ENCODE measurements at regions of chr19 and their contacts with region 1.

Region 1: GRCh38 chr19:10112895-10113591 is 1.6 kb downstream of the P2RY11 start:
- DNase-seq: peak; percentile 66
- ATAC-seq: peak; percentile 49
- H3K4me3 Mint-ChIP-seq: peak overlapping the region; percentile 76
- H3K27ac Mint-ChIP-seq: peak overlapping the region; percentile 82
- H3K4me1 Mint-ChIP-seq: peaks cover 40% of the 10 kb centered on the region
- H3K27me3 Mint-ChIP-seq: no peaks in the 10 kb centered on the region
- CTCF ChIP-seq: no peak

Region 2: GRCh38 chr19:10027158-10027693 is 85.8 kb before region 1 on chr19:
- CTCF ChIA-PET with region 1: interaction called, 4 read pairs
- POLR2A ChIA-PET with region 1: interaction called, 5 read pairs
- intact Hi-C with region 1: loop called (anchors 5 kb)
- DNase-seq: no peak
- ATAC-seq: no peak
- H3K4me3 Mint-ChIP-seq: no peak overlapping the region
- H3K27ac Mint-ChIP-seq: no peak overlapping the region
- H3K4me1 Mint-ChIP-seq: no peaks in the 10 kb centered on the region
- H3K27me3 Mint-ChIP-seq: peaks cover 23% of the 10 kb centered on the region
- CTCF ChIP-seq: no peak

Region 3: GRCh38 chr19:10074153-10074552 is 38.9 kb before region 1 on chr19:
- CTCF ChIA-PET with region 1: no interaction called
- POLR2A ChIA-PET with region 1: no interaction called
- intact Hi-C with region 1: loop called (anchors 1 kb)
- DNase-seq: no peak
- ATAC-seq: peak; percentile 52
- H3K4me3 Mint-ChIP-seq: no peak overlapping the region
- H3K27ac Mint-ChIP-seq: no peak overlapping the region
- H3K4me1 Mint-ChIP-seq: no peaks in the 10 kb centered on the region
- H3K27me3 Mint-ChIP-seq: peaks cover under 1% of the 10 kb centered on the region
- CTCF ChIP-seq: no peak

Region 4: DNA sequence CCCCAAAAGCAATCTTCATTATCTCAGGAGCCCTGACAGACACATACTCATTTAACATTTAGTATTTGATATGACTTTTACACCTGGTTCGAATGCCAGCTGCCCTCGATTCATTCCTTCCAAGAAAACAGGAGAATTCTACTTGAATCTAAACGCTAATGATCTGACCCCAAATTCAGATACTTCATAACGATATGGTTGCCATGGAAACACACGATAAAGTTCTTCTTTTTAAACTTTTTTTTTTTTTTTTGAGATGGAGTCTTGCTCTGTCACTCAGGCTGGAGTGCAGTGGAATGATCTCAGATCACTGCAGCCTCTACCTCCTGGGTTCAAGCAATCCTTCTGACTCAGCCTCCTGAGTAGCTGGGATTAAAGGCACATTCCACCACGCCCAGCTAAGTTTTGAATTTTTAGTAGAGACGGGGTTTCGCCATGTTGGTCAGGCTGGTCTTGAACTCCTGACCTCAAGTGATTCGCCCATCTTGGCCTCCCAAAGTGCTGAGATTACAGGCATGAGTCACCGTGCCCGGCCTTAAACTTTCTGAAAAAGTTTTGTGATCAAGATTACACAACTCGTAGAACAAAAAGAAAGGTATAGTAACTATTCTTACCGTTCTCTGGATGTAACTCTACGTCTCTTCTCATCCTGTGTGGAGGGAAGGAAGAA is 60.3 kb after region 1 on chr19:
- CTCF ChIA-PET with region 1: no interaction called
- POLR2A ChIA-PET with region 1: no interaction called
- intact Hi-C with region 1: no loop called
- DNase-seq: no peak
- ATAC-seq: no peak
- H3K4me3 Mint-ChIP-seq: no peak overlapping the region
- H3K27ac Mint-ChIP-seq: no peak overlapping the region
- H3K4me1 Mint-ChIP-seq: no peaks in the 10 kb centered on the region
- H3K27me3 Mint-ChIP-seq: no peaks in the 10 kb centered on the region
- CTCF ChIP-seq: no peak